ENCODE measurements at regions of chr11 and their contacts with region 1.

Region 1: GRCh38 chr11:35391922-35392813 is 27.2 kb downstream of the SLC1A2 start:
- DNase-seq: peak; percentile 92
- H3K4me3 Mint-ChIP-seq: no peak overlapping the region
- H3K27ac Mint-ChIP-seq: no peak overlapping the region
- H3K4me1 Mint-ChIP-seq: peaks cover 43% of the 10 kb centered on the region
- H3K27me3 Mint-ChIP-seq: no peaks in the 10 kb centered on the region
- CTCF ChIP-seq: peak; percentile 87

Region 2: DNA sequence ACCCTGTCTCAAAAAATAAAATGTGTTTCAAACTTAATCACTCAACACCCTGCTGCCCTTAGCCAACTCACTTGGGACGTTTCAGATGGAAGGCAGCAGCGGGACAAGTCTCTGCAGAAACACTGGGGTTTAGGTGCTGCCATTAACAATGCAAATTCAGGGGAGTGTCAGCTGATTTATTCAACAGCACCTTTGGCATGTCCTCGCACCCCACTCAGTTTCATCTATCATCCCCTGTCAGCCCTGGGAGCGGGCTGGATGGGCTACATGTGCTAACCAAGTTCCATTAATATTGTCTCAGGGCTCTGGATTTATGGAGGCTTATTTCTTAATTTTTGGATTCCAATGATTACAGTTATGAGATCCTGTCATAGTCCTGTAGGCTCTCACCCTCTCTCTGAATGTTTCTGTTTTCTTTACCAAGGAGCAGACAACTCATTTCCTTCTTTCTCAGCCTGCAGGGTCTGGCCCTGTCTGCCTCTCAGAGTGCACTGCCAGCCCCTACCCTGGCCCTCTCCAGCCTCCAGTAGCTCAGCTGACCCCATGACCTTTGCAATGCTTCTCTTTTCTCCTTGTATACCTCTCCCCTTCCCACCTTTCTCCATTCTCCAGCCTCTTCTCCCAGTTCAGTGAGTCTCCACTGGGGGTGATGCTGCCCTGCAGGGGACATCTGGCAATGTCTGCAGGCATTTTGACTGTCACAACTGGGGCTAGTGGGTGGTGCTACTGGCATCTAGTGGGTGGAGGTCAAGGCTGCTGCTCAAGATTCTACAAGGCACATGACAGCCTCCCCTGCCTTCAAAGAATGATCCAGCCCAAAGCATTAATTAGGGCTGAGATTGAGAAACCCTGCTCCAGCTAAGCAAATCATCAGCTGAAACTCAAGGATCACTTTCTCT is 555.0 kb before region 1 on chr11:
- CTCF ChIA-PET with region 1: no interaction called
- intact Hi-C with region 1: no loop called
- DNase-seq: peak; percentile 34
- H3K4me3 Mint-ChIP-seq: no peak overlapping the region
- H3K27ac Mint-ChIP-seq: no peak overlapping the region
- H3K4me1 Mint-ChIP-seq: peaks cover 12% of the 10 kb centered on the region
- H3K27me3 Mint-ChIP-seq: no peaks in the 10 kb centered on the region
- CTCF ChIP-seq: no peak

Region 3: DNA sequence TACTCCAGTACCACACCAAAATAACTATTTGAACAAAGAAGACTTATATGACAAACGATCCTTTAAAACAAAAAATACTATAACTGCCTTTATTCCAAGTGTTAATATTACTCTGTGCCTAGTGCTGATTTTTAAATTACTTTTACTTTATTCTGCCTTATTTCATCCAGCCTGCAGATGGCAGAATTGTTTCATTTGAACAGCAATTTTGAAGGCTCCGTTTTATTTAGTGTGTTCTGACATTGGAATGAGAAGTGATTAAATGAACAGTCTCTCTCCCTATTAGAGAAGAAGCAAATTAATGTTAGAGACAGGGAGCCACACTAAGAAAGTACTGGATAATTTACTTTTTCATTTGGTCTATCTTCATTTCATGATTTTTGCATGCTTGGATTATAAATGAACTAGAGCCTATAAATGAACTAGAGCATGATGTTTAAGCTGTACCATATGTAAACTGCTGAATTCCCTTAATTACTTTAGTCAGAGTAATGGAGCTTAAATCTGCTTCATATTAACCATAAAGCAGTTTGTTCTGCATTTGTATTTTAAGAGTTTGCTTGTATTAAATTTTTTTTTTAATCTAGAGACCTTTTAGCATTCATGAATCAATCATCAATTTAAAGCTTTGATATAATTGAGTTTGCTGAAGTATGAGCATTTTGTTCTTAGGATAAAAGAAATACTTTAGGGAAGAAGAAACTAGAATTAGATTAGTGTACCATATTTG is 465.9 kb before region 1 on chr11:
- CTCF ChIA-PET with region 1: interaction called, 12 read pairs
- intact Hi-C with region 1: loop called (anchors 1 kb)
- DNase-seq: peak; percentile 38
- H3K4me3 Mint-ChIP-seq: peak overlapping the region; percentile 5
- H3K27ac Mint-ChIP-seq: peak overlapping the region; percentile 38
- H3K4me1 Mint-ChIP-seq: peaks cover 49% of the 10 kb centered on the region
- H3K27me3 Mint-ChIP-seq: no peaks in the 10 kb centered on the region
- CTCF ChIP-seq: peak; percentile 54

Region 4: GRCh38 chr11:35144136-35144741 is 247.9 kb before region 1 on chr11:
- CTCF ChIA-PET with region 1: no interaction called
- intact Hi-C with region 1: loop called (anchors 5 kb)
- DNase-seq: peak; percentile 24
- H3K4me3 Mint-ChIP-seq: peak overlapping the region; percentile 87
- H3K27ac Mint-ChIP-seq: peak overlapping the region; percentile 84
- H3K4me1 Mint-ChIP-seq: peaks cover 60% of the 10 kb centered on the region
- H3K27me3 Mint-ChIP-seq: no peaks in the 10 kb centered on the region
- CTCF ChIP-seq: no peak

Region 5: GRCh38 chr11:35237860-35238715 is 154.1 kb before region 1 on chr11:
- CTCF ChIA-PET with region 1: no interaction called
- intact Hi-C with region 1: loop called (anchors 10 kb)
- DNase-seq: peak; percentile 32
- H3K4me3 Mint-ChIP-seq: no peak overlapping the region
- H3K27ac Mint-ChIP-seq: no peak overlapping the region
- H3K4me1 Mint-ChIP-seq: peaks cover 47% of the 10 kb centered on the region
- H3K27me3 Mint-ChIP-seq: no peaks in the 10 kb centered on the region
- CTCF ChIP-seq: peak; percentile 80

Region 6: GRCh38 chr11:35274909-35275807 is 117.0 kb before region 1 on chr11:
- CTCF ChIA-PET with region 1: no interaction called
- intact Hi-C with region 1: loop called (anchors 5 kb)
- DNase-seq: peak; percentile 66
- H3K4me3 Mint-ChIP-seq: peak overlapping the region; percentile 47
- H3K27ac Mint-ChIP-seq: peak overlapping the region; percentile 67
- H3K4me1 Mint-ChIP-seq: peaks cover 31% of the 10 kb centered on the region
- H3K27me3 Mint-ChIP-seq: no peaks in the 10 kb centered on the region
- CTCF ChIP-seq: no peak

Measured in Calu3 (cell line).